Aorta (tissue), 5 donors: ENCODE measurements at regions of chr17 and their contacts with region 1.

Region 1: GRCh38 chr17:69978056-69978646 is 96.9 kb upstream of the KCNJ16 start:
- DNase-seq: no peak
- ATAC-seq: no peak
- H3K4me3 ChIP-seq: no peak overlapping the region
- H3K27ac ChIP-seq: no peak overlapping the region
- H3K4me1 ChIP-seq: no peaks in the 10 kb centered on the region
- H3K27me3 ChIP-seq: no peaks in the 10 kb centered on the region

Region 2: DNA sequence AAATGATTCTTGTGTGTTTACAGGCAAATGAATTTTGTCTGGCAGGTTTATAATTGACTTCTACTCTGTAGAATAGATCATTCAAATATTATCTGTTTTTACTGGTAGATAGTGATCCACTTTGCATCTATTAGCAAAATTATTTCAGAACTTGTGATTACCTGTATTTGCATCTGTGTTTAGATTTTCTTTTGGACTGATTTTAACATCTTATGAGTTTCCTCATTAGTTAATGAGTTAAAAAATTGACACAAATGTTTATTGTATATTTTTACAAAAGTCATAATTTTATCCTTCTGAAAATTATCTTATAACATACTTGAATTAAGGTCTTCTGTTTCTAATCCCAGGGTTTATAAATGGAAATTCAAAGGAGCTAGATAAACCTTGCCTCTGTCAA is 35.1 kb before region 1 on chr17:
- intact Hi-C with region 1: loop called in 1 of 2 experiments (anchors 2 kb)
- DNase-seq: no peak
- ATAC-seq: no peak
- H3K4me3 ChIP-seq: no peak overlapping the region
- H3K27ac ChIP-seq: no peak overlapping the region
- H3K4me1 ChIP-seq: no peaks in the 10 kb centered on the region
- H3K27me3 ChIP-seq: no peaks in the 10 kb centered on the region